ENCODE measurements at regions of chr12 and their contacts with region 1.

Region 1: GRCh38 chr12:100827901-100828520 is 33.4 kb downstream of the ANO4 start:
- DNase-seq: peak; percentile 56
- H3K4me3 Mint-ChIP-seq: no peak overlapping the region
- H3K27ac Mint-ChIP-seq: no peak overlapping the region
- H3K4me1 Mint-ChIP-seq: no peaks in the 10 kb centered on the region
- H3K27me3 Mint-ChIP-seq: no peaks in the 10 kb centered on the region
- CTCF ChIP-seq: peak; percentile 88

Region 2: GRCh38 chr12:100987552-100988521 is 159.8 kb after region 1 on chr12:
- CTCF ChIA-PET with region 1: no interaction called
- POLR2A ChIA-PET with region 1: no interaction called
- intact Hi-C with region 1: loop called (anchors 5 kb)
- DNase-seq: peak; percentile 53
- H3K4me3 Mint-ChIP-seq: no peak overlapping the region
- H3K27ac Mint-ChIP-seq: peak overlapping the region; percentile 33
- H3K4me1 Mint-ChIP-seq: peaks cover 6% of the 10 kb centered on the region
- H3K27me3 Mint-ChIP-seq: no peaks in the 10 kb centered on the region
- CTCF ChIP-seq: peak; percentile 24

Region 3: DNA sequence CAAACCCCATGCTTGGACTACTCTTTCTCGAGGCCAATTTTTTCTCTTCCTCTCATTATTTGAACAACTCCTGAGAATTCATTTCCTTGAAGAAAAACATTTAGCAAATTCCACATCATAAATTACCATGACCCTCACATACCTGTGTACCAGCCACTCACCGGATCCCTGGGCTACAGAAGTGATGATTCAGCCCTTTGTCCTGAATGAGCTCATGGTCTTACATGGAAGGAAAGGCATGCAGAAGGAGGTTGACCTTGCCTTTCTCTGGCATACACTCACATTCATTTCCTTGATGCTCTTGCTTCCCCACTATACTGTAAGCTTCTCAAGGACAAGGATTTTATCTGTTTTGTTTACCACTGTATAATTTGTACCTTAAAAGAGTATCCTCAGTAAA is 190.5 kb after region 1 on chr12:
- CTCF ChIA-PET with region 1: interaction called, 10 read pairs
- POLR2A ChIA-PET with region 1: no interaction called
- intact Hi-C with region 1: no loop called
- DNase-seq: peak; percentile 75
- H3K4me3 Mint-ChIP-seq: peak overlapping the region; percentile 3
- H3K27ac Mint-ChIP-seq: peak overlapping the region; percentile 79
- H3K4me1 Mint-ChIP-seq: peaks cover 31% of the 10 kb centered on the region
- H3K27me3 Mint-ChIP-seq: no peaks in the 10 kb centered on the region
- CTCF ChIP-seq: no peak

Region 4: DNA sequence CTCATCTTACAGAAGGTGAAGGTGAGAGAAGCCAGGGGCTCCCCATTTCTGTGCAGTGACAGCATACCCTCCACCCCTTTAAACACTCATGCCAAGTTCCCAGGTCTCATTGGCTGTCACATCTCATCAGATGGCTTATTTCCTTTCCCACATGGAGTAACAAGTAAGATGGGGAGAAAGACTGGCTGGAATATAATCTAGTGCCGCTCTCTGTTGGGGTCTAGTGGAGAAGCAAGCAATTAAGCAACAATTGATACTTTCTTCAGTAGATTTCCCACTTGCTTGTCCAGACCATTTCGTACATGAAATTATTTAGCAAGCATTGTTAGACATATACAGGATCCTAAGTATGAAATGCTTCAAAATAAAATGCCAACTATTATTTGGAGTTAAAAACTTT is 289.8 kb after region 1 on chr12:
- CTCF ChIA-PET with region 1: interaction called, 5 read pairs
- POLR2A ChIA-PET with region 1: no interaction called
- intact Hi-C with region 1: loop called (anchors 2 kb)
- DNase-seq: peak; percentile 7
- H3K4me3 Mint-ChIP-seq: no peak overlapping the region
- H3K27ac Mint-ChIP-seq: no peak overlapping the region
- H3K4me1 Mint-ChIP-seq: no peaks in the 10 kb centered on the region
- H3K27me3 Mint-ChIP-seq: no peaks in the 10 kb centered on the region
- CTCF ChIP-seq: no peak

Region 5: DNA sequence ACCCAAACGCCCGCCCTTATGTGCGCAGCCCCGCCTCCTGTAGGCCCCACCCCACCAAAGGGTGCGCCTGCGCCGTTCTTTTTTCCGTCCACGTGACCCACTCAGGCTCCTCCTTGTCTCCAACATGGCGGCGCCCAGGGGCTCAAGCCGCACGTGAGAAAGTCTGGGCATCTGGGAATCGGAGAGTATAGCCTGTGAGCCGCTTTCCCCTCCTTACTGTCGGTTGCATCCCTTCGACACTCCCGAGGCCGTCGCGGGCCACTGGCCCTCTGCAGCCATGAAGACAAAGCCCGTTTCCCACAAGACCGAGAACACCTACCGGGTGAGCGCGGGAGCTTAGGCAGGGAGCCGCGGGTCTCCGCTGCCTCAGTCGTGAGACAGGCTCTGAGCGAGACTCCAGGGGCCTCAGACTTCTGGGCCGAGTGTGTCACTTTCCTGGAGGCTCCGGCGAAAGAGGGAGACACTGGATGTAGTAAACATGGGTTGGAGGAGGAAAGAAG is 452.0 kb after region 1 on chr12 and contains the start of gene UTP20:
- CTCF ChIA-PET with region 1: interaction called, 14 read pairs
- POLR2A ChIA-PET with region 1: no interaction called
- intact Hi-C with region 1: loop called (anchors 5 kb)
- DNase-seq: peak; percentile 91
- H3K4me3 Mint-ChIP-seq: peak within 1 kb of the TSS; percentile 84
- H3K27ac Mint-ChIP-seq: peak within 1 kb of the TSS; percentile 86
- H3K4me1 Mint-ChIP-seq: peaks cover 12% of the 10 kb centered on the region
- H3K27me3 Mint-ChIP-seq: no peaks in the 10 kb centered on the region
- CTCF ChIP-seq: no peak
- total RNA-seq, gene UTP20: 10.0 and 15.0 TPM in 2 replicates

Region 6: GRCh38 chr12:101323255-101323654 is 495.2 kb after region 1 on chr12:
- CTCF ChIA-PET with region 1: interaction called, 61 read pairs
- POLR2A ChIA-PET with region 1: no interaction called
- intact Hi-C with region 1: loop called (anchors 1 kb)
- DNase-seq: no peak
- H3K4me3 Mint-ChIP-seq: no peak overlapping the region
- H3K27ac Mint-ChIP-seq: no peak overlapping the region
- H3K4me1 Mint-ChIP-seq: no peaks in the 10 kb centered on the region
- H3K27me3 Mint-ChIP-seq: no peaks in the 10 kb centered on the region
- CTCF ChIP-seq: no peak